ENCODE measurements at regions of chr15 and their contacts with region 1.

Region 1: GRCh38 chr15:39756806-39757522 is 25.7 kb downstream of the FSIP1 start:
- DNase-seq: no peak
- ATAC-seq: no peak

Region 2: GRCh38 chr15:38707802-38708671 is 1048.9 kb before region 1 on chr15:
- intact Hi-C with region 1: loop called (anchors 5 kb)
- DNase-seq: no peak
- ATAC-seq: peak; percentile 89

Region 3: DNA sequence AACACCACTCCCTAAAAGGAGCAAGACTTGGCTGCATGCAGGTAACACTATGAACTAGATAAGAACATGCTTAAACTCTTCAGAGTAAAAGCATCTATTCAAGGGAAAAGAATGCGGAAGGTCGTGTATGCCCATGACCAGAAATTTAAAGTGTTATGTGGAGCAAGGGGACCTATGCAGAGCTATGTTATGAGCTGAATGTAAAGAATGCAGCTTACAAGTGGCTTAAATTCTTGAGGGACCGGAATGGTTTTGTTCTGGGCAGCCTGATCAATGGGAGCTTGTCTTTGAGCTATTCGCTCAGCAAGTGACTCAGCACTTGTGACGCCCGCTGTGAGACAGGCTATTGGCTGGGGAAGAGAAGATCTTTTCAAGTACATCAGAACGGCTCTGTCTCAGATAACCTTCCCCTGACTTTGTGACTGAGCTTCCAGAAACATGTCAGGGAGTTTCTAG is 543.6 kb before region 1 on chr15:
- intact Hi-C with region 1: no loop called
- DNase-seq: peak; percentile 67
- ATAC-seq: peak; percentile 98

Region 4: GRCh38 chr15:39680868-39681267 is 76.1 kb before region 1 on chr15:
- intact Hi-C with region 1: loop called (anchors 5 kb)
- DNase-seq: no peak
- ATAC-seq: no peak